GM12878 (cell line): ENCODE measurements at regions of chr15 and their contacts with region 1.

Region 1: GRCh38 chr15:85412956-85413854 is 32.8 kb downstream of the AKAP13 start:
- DNase-seq: peak; percentile 96
- ATAC-seq: peak; percentile 97
- H3K4me3 ChIP-seq: peak overlapping the region; percentile 33; the same call in 1 of the 2 replicates
- H3K27ac ChIP-seq: peak overlapping the region; percentile 94
- H3K4me1 ChIP-seq: peaks cover 64% of the 10 kb centered on the region
- H3K27me3 ChIP-seq: no peaks in the 10 kb centered on the region
- CTCF ChIP-seq: peak in 2 of 3 experiments; percentile 6 to 29; a peak in 3 of 6 replicates
- EP300 ChIP-seq: peak; percentile 93 to 94
- POLR2A ChIP-seq: peak; percentile 21; the same call in 1 of the 2 replicates
- RAD21 ChIP-seq: peak; percentile 32; the same call in 1 of the 2 replicates

Region 2: GRCh38 chr15:85073556-85074194 is 339.5 kb before region 1 on chr15:
- CTCF ChIA-PET with region 1: no interaction called
- POLR2A ChIA-PET with region 1: no interaction called
- RAD21 ChIA-PET with region 1: no interaction called
- SMC1A ChIA-PET with region 1: no interaction called
- in situ Hi-C with region 1: no loop called
- intact Hi-C with region 1: no loop called
- DNase-seq: no peak
- ATAC-seq: peak; percentile 97
- H3K4me3 ChIP-seq: no peak overlapping the region
- H3K27ac ChIP-seq: no peak overlapping the region
- H3K4me1 ChIP-seq: no peaks in the 10 kb centered on the region
- H3K27me3 ChIP-seq: no peaks in the 10 kb centered on the region
- CTCF ChIP-seq: no peak; a peak in 1 of 6 replicates
- EP300 ChIP-seq: peak in 1 of 2 experiments; percentile 49; a peak in 1 of 4 replicates
- POLR2A ChIP-seq: no peak
- RAD21 ChIP-seq: peak; percentile 11; the same call in 1 of the 2 replicates

Region 3: GRCh38 chr15:85296615-85297402 is 116.4 kb before region 1 on chr15:
- CTCF ChIA-PET with region 1: interaction called, 174 read pairs
- POLR2A ChIA-PET with region 1: interaction called, 6 read pairs
- RAD21 ChIA-PET with region 1: interaction called, 177 read pairs
- SMC1A ChIA-PET with region 1: interaction called, 192 read pairs
- in situ Hi-C with region 1: no loop called
- intact Hi-C with region 1: loop called (anchors 1 kb)
- DNase-seq: peak; percentile 68
- ATAC-seq: peak; percentile 98
- H3K4me3 ChIP-seq: no peak overlapping the region
- H3K27ac ChIP-seq: no peak overlapping the region
- H3K4me1 ChIP-seq: no peaks in the 10 kb centered on the region
- H3K27me3 ChIP-seq: no peaks in the 10 kb centered on the region; a peak in 1 of 4 replicates
- CTCF ChIP-seq: peak; percentile 76 to 79 (median 77)
- EP300 ChIP-seq: no peak
- POLR2A ChIP-seq: no peak
- RAD21 ChIP-seq: peak; percentile 97

Region 4: GRCh38 chr15:85330901-85331588 is 82.2 kb before region 1 on chr15:
- CTCF ChIA-PET with region 1: interaction called, 119 read pairs
- POLR2A ChIA-PET with region 1: interaction called, 24 read pairs
- RAD21 ChIA-PET with region 1: interaction called, 202 read pairs
- SMC1A ChIA-PET with region 1: interaction called, 136 read pairs
- in situ Hi-C with region 1: loop called (anchors 5 kb)
- intact Hi-C with region 1: loop called (anchors 1 kb)
- DNase-seq: peak; percentile 90
- ATAC-seq: peak; percentile 83
- H3K4me3 ChIP-seq: peak overlapping the region; percentile 70
- H3K27ac ChIP-seq: peak overlapping the region; percentile 84
- H3K4me1 ChIP-seq: peaks cover 44% of the 10 kb centered on the region
- H3K27me3 ChIP-seq: no peaks in the 10 kb centered on the region
- CTCF ChIP-seq: peak; percentile 89 to 99 (median 96)
- EP300 ChIP-seq: peak in 1 of 2 experiments; percentile 56; a peak in 1 of 4 replicates
- POLR2A ChIP-seq: peak; percentile 61
- RAD21 ChIP-seq: peak; percentile 98

Region 5: DNA sequence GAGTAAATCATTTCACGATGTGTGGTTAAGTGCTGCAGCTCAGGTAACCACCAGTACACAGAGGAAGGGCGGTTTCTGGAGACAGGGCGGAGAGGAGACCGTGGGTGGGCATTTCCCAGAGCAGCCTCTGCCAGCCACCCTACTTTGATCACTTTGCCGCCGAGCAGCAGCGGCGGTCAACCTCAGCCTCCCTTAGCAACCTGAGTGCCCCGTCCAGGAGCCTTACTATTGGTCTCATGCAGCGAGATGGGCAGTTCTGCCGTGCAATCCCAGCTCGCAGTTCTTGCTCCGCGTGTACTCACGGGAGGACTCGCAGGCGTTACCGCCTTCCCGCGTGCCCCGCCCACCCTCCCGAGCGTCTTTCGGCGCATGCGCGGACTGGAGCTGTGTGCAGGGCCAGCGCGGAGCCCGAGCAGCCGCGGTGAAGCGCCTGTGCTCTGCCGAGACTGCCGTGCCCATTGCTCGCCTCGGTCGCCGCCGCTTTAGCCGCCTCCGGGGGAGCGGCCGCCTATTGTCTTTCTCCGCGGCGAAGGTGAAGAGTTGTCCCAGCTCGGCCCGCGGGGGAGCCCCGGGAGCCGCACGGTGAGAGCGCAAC is 32.9 kb before region 1 on chr15 and contains the start of gene AKAP13:
- CTCF ChIA-PET with region 1: interaction called, 80 read pairs
- POLR2A ChIA-PET with region 1: interaction called, 47 read pairs
- RAD21 ChIA-PET with region 1: interaction called, 121 read pairs
- SMC1A ChIA-PET with region 1: interaction called, 70 read pairs
- in situ Hi-C with region 1: no loop called
- intact Hi-C with region 1: loop called (anchors 1 kb)
- DNase-seq: peak; percentile 98
- ATAC-seq: peak; percentile 89
- H3K4me3 ChIP-seq: peak within 1 kb of the TSS; percentile 80
- H3K27ac ChIP-seq: peak within 1 kb of the TSS; percentile 78
- H3K4me1 ChIP-seq: peaks cover 12% of the 10 kb centered on the region; the same call in 1 of the 2 replicates
- H3K27me3 ChIP-seq: no peaks in the 10 kb centered on the region; a peak in 2 of 4 replicates
- CTCF ChIP-seq: no peak
- EP300 ChIP-seq: no peak
- POLR2A ChIP-seq: peak; percentile 88
- RAD21 ChIP-seq: no peak
- polyA plus RNA-seq, gene AKAP13: 14.4 to 21.5 TPM

Region 6: DNA sequence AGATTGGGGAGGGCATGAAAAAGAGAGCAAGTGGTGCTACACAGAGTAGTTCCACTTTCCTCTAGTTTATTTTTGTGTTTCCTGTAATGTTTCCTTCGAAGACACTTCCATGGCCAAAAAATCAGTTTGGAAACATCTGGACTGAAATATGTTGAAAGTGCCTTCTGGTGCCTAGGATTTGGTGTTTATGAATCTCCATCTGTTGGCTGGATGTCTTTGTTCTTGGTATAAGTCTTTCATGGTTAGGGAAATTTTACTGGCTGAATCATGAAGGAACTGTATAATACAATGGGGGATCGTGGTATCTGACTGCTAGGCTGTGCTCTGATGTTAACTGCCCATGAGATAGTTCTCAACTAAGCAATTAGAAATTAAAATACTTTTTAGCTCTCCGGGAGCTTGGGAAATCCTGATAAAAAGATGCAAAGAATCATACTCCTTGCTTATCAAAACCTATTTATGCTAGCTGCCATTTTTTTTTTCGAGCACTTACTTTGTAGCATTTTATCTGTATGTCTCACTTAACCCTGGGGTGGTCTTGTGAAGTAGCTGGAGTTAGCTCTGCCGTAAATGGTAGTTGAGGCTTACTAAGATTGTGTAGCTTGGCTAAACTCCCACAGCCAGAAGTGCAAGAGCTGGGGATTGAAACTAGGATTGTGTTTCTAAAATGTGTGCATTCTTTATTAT is 10.9 kb before region 1 on chr15:
- CTCF ChIA-PET with region 1: interaction called, 109 read pairs
- POLR2A ChIA-PET with region 1: interaction called, 15 read pairs
- RAD21 ChIA-PET with region 1: interaction called, 93 read pairs
- SMC1A ChIA-PET with region 1: interaction called, 89 read pairs
- in situ Hi-C with region 1: no loop called
- intact Hi-C with region 1: loop called (anchors 1 kb)
- DNase-seq: no peak
- ATAC-seq: peak; percentile 64
- H3K4me3 ChIP-seq: peak overlapping the region; percentile 32; the same call in 1 of the 2 replicates
- H3K27ac ChIP-seq: peak overlapping the region; percentile 75
- H3K4me1 ChIP-seq: peaks cover 58% of the 10 kb centered on the region
- H3K27me3 ChIP-seq: no peaks in the 10 kb centered on the region
- CTCF ChIP-seq: no peak
- EP300 ChIP-seq: no peak
- POLR2A ChIP-seq: no peak
- RAD21 ChIP-seq: no peak

Region 7: GRCh38 chr15:85475317-85475701 is 62.1 kb after region 1 on chr15:
- CTCF ChIA-PET with region 1: interaction called, 29 read pairs
- POLR2A ChIA-PET with region 1: interaction called, 14 read pairs
- RAD21 ChIA-PET with region 1: interaction called, 64 read pairs
- SMC1A ChIA-PET with region 1: interaction called, 35 read pairs
- in situ Hi-C with region 1: no loop called
- intact Hi-C with region 1: loop called (anchors 5 kb)
- DNase-seq: peak; percentile 85
- ATAC-seq: peak; percentile 89
- H3K4me3 ChIP-seq: peak overlapping the region; percentile 39; the same call in 1 of the 2 replicates
- H3K27ac ChIP-seq: peak overlapping the region; percentile 90
- H3K4me1 ChIP-seq: peaks cover 42% of the 10 kb centered on the region
- H3K27me3 ChIP-seq: no peaks in the 10 kb centered on the region
- CTCF ChIP-seq: no peak
- EP300 ChIP-seq: peak; percentile 26 to 44; a peak in 1 of 4 replicates
- POLR2A ChIP-seq: no peak
- RAD21 ChIP-seq: 0 out of 2 replicates have a peak, but pooled peaks have one; percentile 8

Region 8: GRCh38 chr15:85689729-85690128 is 276.5 kb after region 1 on chr15:
- CTCF ChIA-PET with region 1: no interaction called
- POLR2A ChIA-PET with region 1: interaction called, 5 read pairs
- RAD21 ChIA-PET with region 1: interaction called, 14 read pairs
- SMC1A ChIA-PET with region 1: interaction called, 3 read pairs
- in situ Hi-C with region 1: no loop called
- intact Hi-C with region 1: no loop called
- DNase-seq: peak; percentile 84
- ATAC-seq: peak; percentile 55
- H3K4me3 ChIP-seq: peak overlapping the region; percentile 62
- H3K27ac ChIP-seq: peak overlapping the region; percentile 97
- H3K4me1 ChIP-seq: peaks cover 67% of the 10 kb centered on the region
- H3K27me3 ChIP-seq: no peaks in the 10 kb centered on the region
- CTCF ChIP-seq: no peak
- EP300 ChIP-seq: no peak; a peak in 1 of 4 replicates
- POLR2A ChIP-seq: peak; percentile 87
- RAD21 ChIP-seq: no peak